Gastrocnemius medialis (tissue), 4 donors: ENCODE measurements at regions of chr15 and their contacts with region 1.

Region 1: DNA sequence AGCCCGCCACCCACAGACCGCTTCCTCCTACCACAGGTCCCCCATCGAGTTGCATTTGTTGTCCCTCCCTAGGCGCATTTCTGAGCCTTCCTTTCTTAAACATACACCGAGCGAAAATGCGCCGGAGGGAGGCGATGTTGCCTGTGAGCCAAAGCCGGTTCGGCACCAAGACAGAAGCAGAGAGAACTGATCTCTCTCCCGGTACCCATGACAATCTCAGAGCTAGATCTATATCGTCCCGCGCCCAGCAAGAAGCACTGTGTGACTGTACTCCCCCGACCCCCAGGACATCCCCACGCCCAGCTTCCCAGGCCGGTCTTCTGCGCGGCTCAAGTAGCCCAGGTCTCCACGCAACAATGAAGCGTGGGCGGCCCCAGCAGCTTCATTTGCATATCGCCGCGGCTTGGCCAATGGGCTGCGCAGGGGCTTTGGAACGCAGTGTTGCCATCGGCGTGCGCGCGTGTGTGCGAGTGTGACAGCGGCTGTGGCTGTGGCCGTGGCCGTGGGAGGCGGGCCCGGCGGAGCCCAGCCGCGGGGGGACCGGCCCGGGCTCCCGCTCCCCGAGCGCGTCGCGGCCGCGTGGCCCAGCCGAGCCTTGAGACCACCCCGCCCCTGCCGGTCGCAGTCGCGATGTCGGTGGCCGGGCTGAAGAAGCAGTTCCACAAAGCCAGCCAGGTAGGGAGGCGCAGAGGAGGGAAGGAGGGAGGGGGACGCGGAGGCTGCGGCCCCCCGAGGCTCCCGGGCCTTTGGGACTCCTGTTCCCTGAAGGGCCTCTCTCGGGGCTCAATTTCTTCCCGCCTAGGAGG is at the start of gene SH3GL3:
- DNase-seq: peak; percentile 35 to 37
- ATAC-seq: peak; percentile 80 to 81
- H3K4me3 ChIP-seq: peak within 1 kb of the TSS; percentile 46 to 53 (median 46)
- H3K27ac ChIP-seq: no peak within 1 kb of the TSS
- H3K4me1 ChIP-seq: no peaks in the 10 kb centered on the region
- H3K27me3 ChIP-seq: peaks cover 12 to 19% (median 14%) of the 10 kb centered on the region in 3 donors
- CTCF ChIP-seq: peak in 1 of 5 experiments; percentile 7
- POLR2A ChIP-seq: no peak
- total RNA-seq, gene SH3GL3: not detected

Region 2: GRCh38 chr15:83698294-83698693 is 251.2 kb after region 1 on chr15:
- in situ Hi-C with region 1: no loop called
- intact Hi-C with region 1: no loop called
- DNase-seq: peak; percentile 19 to 57
- ATAC-seq: peak; percentile 65 to 74
- H3K4me3 ChIP-seq: no peak overlapping the region
- H3K27ac ChIP-seq: peak overlapping the region in 1 of 4 donors; percentile 34
- H3K4me1 ChIP-seq: peaks cover 0 to 3% of the 10 kb centered on the region in 2 donors
- H3K27me3 ChIP-seq: no peaks in the 10 kb centered on the region
- CTCF ChIP-seq: no peak
- POLR2A ChIP-seq: no peak

Region 3: DNA sequence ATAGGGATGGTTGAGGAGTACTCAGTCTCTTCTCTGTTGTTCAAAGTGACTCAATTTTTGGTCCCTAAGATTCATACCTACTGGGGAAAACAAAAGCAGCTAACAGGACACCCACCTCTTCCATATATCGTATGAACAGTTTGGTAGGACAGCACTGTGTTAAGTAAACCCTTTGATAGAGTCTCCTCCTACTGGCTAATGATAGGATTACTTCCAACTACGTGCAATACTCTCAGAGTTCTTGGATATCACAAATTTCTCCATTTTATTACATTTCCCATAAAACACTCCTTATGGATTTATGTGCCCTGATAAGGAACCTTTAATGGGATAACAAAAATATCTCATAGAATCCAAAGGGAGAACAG is 588.3 kb after region 1 on chr15:
- in situ Hi-C with region 1: loop called in 2 of 4 experiments (anchors 25 kb)
- intact Hi-C with region 1: no loop called
- DNase-seq: no peak
- ATAC-seq: no peak
- H3K4me3 ChIP-seq: no peak overlapping the region
- H3K27ac ChIP-seq: no peak overlapping the region
- H3K4me1 ChIP-seq: no peaks in the 10 kb centered on the region
- H3K27me3 ChIP-seq: no peaks in the 10 kb centered on the region
- CTCF ChIP-seq: peak in 1 of 5 experiments; percentile 11
- POLR2A ChIP-seq: no peak